ENCODE measurements at regions of chr16 and their contacts with region 1.

Region 1: DNA sequence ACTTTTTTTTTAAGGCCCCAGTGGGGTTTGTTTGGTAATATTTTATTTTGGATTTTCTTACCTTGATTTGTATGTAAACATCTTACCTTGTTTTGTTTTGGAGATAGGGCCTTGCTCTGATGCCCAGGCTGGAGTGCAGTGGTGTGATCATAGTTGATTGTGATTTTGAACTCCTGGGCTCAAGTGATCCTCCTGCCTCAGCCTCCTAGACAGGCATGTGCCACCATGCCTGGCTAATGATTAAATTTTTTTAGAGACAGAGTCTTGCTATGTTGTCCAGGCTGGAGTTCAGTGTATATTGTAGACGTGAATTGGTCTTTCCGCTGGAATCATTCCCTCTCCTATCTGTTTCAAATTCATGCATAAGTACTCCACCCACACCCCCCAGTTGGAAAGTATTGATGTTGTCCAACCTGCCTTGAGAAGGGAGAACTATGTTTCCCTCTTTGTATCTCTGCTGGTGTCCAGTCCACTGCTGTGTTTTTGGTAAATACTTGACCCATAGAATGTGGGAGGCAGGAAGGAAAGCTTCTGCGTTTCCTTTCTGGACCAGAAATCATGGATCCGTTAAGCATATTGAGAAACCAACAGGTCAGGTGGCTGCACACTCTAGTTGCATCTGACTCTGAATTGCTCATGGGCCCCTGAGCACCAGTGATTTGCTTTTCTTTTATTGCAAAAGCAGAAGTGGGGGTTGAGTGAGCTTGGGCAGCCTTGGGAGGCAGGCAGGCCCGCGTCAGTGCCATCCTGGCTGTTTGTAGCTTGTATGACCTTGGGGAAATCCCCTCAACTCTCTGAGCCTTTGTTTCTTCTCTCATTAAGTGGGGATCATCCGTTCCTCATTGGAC is 25.0 kb downstream of the RMI2 start:
- DNase-seq: no peak
- H3K4me3 Mint-ChIP-seq: no peak overlapping the region
- H3K27ac Mint-ChIP-seq: no peak overlapping the region
- H3K4me1 Mint-ChIP-seq: peaks cover 25% of the 10 kb centered on the region
- H3K27me3 Mint-ChIP-seq: no peaks in the 10 kb centered on the region

Region 2: DNA sequence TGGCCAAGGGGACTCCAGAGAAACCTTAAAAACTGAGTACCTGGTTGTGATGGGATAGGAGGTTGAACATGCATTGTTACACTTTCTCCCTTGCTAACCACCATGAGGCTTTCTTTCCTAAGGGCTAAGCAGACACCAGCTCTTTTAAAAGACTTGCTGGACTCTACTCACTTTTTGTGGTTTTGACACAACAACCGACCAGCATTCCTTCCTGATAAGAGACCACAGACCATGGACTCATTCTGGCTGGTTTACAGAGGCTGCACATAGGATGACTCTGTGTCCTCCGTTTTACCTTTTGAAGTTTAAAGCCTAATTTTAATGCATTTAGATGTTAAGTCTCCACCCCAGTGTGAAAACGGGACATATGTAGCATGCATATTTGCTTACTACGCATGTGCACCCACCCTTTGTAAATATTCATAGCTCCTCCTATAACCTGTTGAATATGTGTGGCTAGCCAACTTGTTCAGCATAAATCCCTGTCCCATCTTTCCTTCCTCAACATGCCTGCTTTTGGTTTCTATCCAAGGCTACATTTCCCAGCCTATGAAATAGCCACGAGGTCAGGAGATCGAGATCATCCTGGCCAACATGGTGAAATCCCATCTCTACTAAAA is 1664.0 kb before region 1 on chr16:
- CTCF ChIA-PET with region 1: no interaction called
- POLR2A ChIA-PET with region 1: no interaction called
- DNase-seq: no peak
- H3K4me3 Mint-ChIP-seq: no peak overlapping the region
- H3K27ac Mint-ChIP-seq: no peak overlapping the region
- H3K4me1 Mint-ChIP-seq: no peaks in the 10 kb centered on the region
- H3K27me3 Mint-ChIP-seq: no peaks in the 10 kb centered on the region

Region 3: DNA sequence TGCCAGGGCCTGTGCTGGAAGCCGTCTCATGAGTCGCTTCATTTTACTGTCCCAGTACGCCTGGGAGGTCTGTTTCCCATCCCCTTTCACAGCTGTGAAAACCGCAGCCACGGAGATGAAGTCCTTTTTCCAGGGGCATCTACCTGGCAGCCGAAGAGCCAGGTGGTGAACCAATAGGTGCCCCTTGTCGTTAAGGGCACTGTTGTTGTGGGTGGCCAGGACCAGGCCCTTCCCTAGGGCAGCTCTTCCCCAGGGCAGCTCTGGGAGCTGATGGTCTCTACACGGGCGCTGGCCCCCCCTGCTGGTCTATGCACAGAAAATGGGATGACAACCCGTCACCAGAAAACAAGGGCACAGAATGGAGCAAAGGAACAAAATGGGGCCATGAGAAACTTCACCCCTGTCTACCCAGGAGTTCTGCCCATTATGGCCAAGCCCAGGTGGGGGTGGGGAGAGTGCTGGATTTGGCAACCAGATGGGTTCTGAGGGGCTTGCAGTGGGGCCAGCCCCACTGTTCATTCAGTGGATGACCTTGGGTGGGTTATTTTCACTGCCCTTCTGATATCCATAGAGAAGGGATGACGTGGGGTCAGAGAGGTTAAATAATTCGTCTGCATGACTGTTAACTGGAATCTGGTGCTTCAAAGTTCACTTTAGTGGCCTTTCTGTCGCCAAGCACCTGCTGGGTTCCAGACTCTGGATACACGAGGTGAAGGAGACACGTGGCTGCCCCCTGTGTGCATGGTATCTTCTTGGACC is 13.6 kb before region 1 on chr16:
- CTCF ChIA-PET with region 1: interaction called, 21 read pairs
- POLR2A ChIA-PET with region 1: interaction called, 4 read pairs
- DNase-seq: peak; percentile 59
- H3K4me3 Mint-ChIP-seq: peak overlapping the region; percentile 69
- H3K27ac Mint-ChIP-seq: peak overlapping the region; percentile 95
- H3K4me1 Mint-ChIP-seq: peaks cover 91% of the 10 kb centered on the region
- H3K27me3 Mint-ChIP-seq: peaks cover 5% of the 10 kb centered on the region

Region 4: DNA sequence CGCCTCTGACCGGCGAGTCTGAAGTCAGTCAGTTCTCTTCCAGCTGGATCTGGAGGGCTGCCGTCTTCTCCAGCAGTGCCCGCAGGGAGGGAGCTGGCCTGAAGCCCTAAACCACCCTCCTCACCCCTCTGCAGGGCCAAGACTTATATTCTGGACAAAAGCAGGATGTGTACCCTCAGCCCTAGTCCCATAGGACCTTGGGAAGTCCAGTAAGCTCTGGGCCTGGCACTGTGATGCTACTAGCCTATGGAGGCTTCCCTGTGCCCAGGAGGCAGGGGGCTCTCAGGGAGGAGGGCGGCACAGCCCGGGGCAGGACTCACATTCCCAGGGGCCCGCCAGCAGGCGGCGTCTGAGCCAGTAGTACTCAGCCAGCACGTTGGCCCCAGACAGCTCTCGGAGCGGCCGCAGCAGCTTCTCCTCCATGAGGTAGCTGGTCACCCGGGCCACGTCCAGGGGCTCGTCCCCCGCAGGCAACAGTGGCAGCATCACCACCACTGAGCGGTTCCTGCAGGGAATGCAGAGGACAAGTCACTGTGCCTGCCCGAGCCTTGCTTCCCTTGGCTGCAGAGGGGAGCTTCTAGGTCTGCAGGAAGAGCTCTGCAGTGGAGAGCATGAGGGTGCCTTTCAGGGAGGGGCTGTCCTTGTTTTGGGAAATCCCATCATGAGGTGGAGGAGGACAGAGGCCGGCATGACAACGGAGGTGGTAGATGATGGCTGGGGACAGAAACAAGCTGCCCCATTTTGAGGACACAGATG is 16.7 kb after region 1 on chr16:
- CTCF ChIA-PET with region 1: interaction called, 26 read pairs
- POLR2A ChIA-PET with region 1: no interaction called
- DNase-seq: no peak
- H3K4me3 Mint-ChIP-seq: no peak overlapping the region
- H3K27ac Mint-ChIP-seq: no peak overlapping the region
- H3K4me1 Mint-ChIP-seq: peaks cover 21% of the 10 kb centered on the region
- H3K27me3 Mint-ChIP-seq: no peaks in the 10 kb centered on the region

Measured in activated CD4-positive, alpha-beta T cell treated with anti-CD3 and anti-CD28 coated beads, Interleukin-2, amount 10 ng/mL, durations not matched to agents 7 days and 5 days (primary cell).